ENCODE measurements at regions of chr6 and their contacts with region 1.

Region 1: GRCh38 chr6:75913040-75913439 is 159.4 kb downstream of the IMPG1 start:
- DNase-seq: no peak
- ATAC-seq: no peak

Region 2: DNA sequence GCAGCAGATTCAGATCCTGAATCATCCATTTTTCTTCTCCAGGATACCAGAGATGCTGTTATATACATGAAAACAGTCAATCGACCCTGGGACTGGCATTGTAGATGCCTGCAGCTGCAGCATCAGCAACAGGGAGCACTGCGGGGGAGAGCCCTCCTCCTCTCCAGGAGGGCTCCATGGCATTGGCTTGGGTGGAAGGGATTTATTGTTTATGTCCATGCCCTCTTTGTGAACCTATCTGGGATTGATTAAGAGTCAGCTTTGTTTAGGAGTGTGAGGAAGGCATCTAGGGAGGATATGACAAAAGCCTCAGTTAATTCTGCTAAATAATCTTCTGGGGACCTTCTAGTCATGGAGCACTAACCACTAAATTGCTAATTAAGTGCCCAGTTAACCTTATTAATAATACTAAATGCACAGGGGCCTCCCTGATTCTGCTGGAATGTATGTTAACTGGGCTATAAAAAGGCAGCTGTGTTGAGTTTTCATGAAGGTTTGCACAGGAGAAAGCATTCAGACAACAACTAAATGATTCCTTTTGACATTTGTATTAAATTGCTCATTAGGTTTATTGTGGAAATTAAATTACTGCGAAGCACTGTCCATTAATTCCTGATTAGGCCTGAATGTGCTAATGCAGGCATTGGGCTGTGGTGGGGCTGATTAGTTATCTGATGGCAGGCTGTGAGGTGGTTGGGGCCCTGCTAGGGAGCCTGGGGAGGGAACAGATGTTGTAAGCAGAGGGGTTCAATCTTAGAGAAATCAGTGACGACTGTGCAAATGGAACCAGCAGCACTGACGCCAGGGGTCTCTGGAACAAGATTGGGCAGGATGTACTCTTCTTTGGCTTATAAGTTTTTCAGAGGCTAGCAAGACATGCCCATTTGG is 101.8 kb after region 1 on chr6:
- intact Hi-C with region 1: no loop called
- DNase-seq: no peak
- ATAC-seq: no peak

Region 3: DNA sequence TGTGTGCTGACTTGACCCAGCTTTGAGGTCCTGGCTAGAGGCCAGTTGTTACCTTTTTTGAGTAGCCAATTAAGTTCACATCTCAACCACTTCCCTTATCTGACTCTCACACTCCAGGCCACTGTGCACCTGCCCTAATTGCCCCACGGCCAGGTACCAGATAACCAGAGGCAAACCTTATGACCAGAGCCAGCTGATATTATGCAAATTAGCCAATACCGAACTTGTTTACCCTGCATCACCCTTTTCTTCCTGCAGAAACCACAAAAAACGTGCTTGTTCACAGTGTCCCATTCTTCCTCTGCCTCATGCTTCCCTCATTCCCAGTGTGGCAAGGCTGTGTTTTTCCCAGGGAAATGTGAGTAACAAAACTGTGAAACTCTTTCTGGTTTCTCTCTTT is 1460.9 kb after region 1 on chr6:
- intact Hi-C with region 1: loop called (anchors 10 kb)
- DNase-seq: no peak
- ATAC-seq: no peak

Measured in left ventricle myocardium superior (tissue), 1 donor.